ENCODE measurements at regions of chr12 and their contacts with region 1.

Region 1: DNA sequence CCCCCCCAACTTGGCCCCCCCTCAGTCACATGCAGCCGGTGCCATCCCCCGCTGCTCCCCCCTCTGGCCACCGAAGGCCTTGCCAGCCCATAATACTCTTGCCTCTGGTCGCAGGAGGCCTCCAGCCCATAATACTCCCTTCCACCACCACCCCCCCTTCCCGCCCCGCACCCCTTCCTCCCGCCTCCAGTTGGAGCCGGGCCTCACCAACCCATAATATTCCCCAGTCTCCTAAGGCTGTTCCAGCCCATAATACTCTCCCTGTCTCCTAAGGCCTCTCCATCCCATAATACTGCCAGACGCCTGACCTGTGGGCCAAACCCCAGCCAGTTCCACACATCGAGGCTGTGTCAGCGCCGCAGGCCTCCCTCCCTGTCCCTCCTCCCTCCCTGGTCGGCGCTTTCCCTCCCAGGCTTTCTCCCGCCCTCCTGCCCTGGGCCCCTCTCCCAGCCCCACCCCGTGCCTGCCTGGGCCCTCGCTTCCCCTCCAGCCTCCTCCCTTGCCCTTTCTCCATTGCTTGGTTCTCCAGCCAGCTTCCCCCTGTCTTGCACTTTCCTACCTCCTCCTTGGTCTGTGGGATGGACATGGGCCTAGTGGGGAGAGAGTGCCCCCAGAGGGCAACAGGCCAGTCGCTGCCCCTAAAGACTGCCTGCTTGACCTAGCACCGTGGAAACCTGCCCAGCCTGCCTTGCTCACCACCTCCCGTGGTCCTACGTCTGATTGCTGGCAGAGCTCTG is 6.8 kb upstream of the CHD4 start:
- DNase-seq: peak; percentile 95 to 98
- H3K4me3 ChIP-seq: peak overlapping the region in 1 of 2 donors; percentile 34
- H3K27ac ChIP-seq: peak overlapping the region; percentile 92 to 98
- H3K4me1 ChIP-seq: peaks cover 0 to 36% (median 28%) of the 10 kb centered on the region in 4 donors
- H3K27me3 ChIP-seq: no peaks in the 10 kb centered on the region
- CTCF ChIP-seq: no peak

Region 2: DNA sequence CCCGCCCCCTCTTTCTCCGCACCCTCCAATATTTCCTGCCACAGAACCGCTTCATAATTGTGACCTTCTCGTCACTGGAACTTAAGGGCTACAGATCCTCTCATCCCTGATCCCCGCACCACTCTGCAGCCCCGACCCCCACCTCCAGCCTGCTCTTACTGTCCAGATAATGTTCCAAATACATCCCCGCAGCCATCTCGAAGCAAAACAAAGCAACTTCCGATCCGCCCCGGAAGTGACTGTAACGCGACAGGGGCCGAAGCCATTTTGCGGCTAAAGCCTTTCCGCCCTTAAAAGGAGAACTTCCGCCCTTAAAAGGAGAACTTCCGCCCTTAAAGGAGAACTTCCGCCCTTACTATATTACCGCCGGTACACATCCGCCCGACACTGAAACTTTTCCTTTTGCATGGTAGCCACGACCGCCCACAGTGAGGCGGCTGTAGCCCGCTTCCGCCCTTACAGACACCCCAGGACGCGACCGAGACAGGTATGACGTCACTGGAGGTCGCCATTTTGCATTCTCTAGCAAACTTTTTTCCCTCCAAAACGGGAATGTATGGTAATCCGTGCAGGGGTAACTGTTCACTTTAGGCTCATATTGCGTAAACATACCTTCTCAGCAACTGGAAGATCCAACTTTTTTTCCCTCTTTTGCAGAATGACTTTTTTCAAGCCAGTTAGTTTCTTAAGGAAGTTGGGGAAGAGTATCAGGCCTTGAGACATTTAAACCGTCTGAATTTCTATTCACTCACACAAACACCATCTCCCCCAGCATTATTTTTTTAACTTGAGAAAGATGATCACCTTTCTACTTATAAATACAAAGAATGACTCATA is 49.2 kb after region 1 on chr12 and contains the start of gene ING4:
- intact Hi-C with region 1: loop called (anchors 10 kb)
- DNase-seq: peak; percentile 99
- H3K4me3 ChIP-seq: peak within 1 kb of the TSS; percentile 67 to 93
- H3K27ac ChIP-seq: peak within 1 kb of the TSS; percentile 81 to 83
- H3K4me1 ChIP-seq: peaks cover 0 to 20% (median 13%) of the 10 kb centered on the region in 4 donors
- H3K27me3 ChIP-seq: no peaks in the 10 kb centered on the region
- CTCF ChIP-seq: no peak

Region 3: GRCh38 chr12:6688999-6689882 is 75.3 kb after region 1 on chr12 and contains the start of gene ZNF384:
- intact Hi-C with region 1: loop called (anchors 2 kb)
- DNase-seq: peak; percentile 98 to 99
- H3K4me3 ChIP-seq: peak within 1 kb of the TSS; percentile 92 to 99
- H3K27ac ChIP-seq: peak within 1 kb of the TSS; percentile 96 to 100
- H3K4me1 ChIP-seq: peaks cover 0 to 41% (median 22%) of the 10 kb centered on the region in 4 donors
- H3K27me3 ChIP-seq: peaks cover 0 to 4% of the 10 kb centered on the region in 2 donors
- CTCF ChIP-seq: peak in 1 of 2 experiments; percentile 46

Region 4: GRCh38 chr12:6778574-6779550 is 164.9 kb after region 1 on chr12:
- intact Hi-C with region 1: loop called (anchors 10 kb)
- DNase-seq: peak; percentile 94 to 96
- H3K4me3 ChIP-seq: peak overlapping the region; percentile 46 to 56
- H3K27ac ChIP-seq: peak overlapping the region; percentile 77 to 82
- H3K4me1 ChIP-seq: peaks cover 0 to 19% (median 11%) of the 10 kb centered on the region in 4 donors
- H3K27me3 ChIP-seq: no peaks in the 10 kb centered on the region
- CTCF ChIP-seq: peak; percentile 89 to 98

Region 5: DNA sequence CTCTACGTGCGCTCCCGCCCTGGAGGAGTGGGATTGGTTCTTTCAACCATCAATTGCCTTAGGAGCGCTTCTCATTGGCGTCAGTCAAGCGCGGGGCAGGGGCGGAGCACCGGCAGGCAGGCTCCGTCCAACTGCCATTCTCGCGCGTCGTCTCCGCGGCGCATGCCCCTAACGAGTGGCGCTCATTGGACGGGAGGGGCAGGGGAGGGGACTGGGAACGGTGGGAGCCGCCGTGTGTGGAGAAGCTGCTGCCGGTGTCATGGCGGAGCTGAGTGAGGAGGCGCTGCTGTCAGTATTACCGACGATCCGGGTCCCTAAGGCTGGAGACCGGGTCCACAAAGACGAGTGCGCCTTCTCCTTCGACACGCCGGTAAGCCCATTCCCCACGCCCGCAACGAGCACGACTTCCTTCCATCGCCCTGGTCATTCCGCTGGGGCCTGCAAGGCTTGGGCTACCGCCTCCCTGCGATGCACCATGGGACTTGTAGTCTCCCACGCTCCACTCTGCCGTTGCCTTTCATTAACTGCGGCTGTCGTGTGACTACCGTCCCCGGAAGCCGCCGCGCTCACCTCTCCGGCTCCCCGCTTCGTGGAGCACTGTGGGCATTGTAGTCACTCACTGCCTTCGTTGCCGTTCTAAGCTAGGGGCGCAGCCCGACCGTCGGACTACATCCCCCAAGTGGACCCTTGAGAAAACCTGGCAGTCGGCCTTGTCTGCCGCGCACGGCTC is 238.1 kb after region 1 on chr12 and contains the start of gene USP5:
- intact Hi-C with region 1: loop called (anchors 5 kb)
- DNase-seq: peak; percentile 99 to 100
- H3K4me3 ChIP-seq: peak within 1 kb of the TSS; percentile 66 to 69
- H3K27ac ChIP-seq: peak within 1 kb of the TSS; percentile 95 to 99
- H3K4me1 ChIP-seq: peaks cover 0 to 31% (median 22%) of the 10 kb centered on the region in 4 donors
- H3K27me3 ChIP-seq: no peaks in the 10 kb centered on the region
- CTCF ChIP-seq: peak in 1 of 2 experiments; percentile 12